ENCODE measurements at regions of chr20 and their contacts with region 1.

Region 1: GRCh38 chr20:3115190-3116107 is 30.9 kb upstream of the AVP start:
- DNase-seq: peak; percentile 37
- H3K4me3 ChIP-seq: no peak overlapping the region
- H3K27ac ChIP-seq: no peak overlapping the region
- H3K4me1 ChIP-seq: no peaks in the 10 kb centered on the region
- H3K27me3 ChIP-seq: no peaks in the 10 kb centered on the region
- CTCF ChIP-seq: peak; percentile 72 to 80

Region 2: GRCh38 chr20:3068986-3069900 is 46.2 kb before region 1 on chr20:
- CTCF ChIA-PET with region 1: no interaction called
- dilution Hi-C with region 1: no loop called
- in situ Hi-C with region 1: loop called in 1 of 2 experiments (anchors 10 kb)
- intact Hi-C with region 1: no loop called
- DNase-seq: no peak
- H3K4me3 ChIP-seq: no peak overlapping the region
- H3K27ac ChIP-seq: no peak overlapping the region
- H3K4me1 ChIP-seq: peaks cover 7% of the 10 kb centered on the region
- H3K27me3 ChIP-seq: peaks cover 10% of the 10 kb centered on the region
- CTCF ChIP-seq: no peak

Measured in mammary epithelial cell (primary cell).